AG04450 (cell line): ENCODE measurements at regions of chr17 and their contacts with region 1.

Region 1: DNA sequence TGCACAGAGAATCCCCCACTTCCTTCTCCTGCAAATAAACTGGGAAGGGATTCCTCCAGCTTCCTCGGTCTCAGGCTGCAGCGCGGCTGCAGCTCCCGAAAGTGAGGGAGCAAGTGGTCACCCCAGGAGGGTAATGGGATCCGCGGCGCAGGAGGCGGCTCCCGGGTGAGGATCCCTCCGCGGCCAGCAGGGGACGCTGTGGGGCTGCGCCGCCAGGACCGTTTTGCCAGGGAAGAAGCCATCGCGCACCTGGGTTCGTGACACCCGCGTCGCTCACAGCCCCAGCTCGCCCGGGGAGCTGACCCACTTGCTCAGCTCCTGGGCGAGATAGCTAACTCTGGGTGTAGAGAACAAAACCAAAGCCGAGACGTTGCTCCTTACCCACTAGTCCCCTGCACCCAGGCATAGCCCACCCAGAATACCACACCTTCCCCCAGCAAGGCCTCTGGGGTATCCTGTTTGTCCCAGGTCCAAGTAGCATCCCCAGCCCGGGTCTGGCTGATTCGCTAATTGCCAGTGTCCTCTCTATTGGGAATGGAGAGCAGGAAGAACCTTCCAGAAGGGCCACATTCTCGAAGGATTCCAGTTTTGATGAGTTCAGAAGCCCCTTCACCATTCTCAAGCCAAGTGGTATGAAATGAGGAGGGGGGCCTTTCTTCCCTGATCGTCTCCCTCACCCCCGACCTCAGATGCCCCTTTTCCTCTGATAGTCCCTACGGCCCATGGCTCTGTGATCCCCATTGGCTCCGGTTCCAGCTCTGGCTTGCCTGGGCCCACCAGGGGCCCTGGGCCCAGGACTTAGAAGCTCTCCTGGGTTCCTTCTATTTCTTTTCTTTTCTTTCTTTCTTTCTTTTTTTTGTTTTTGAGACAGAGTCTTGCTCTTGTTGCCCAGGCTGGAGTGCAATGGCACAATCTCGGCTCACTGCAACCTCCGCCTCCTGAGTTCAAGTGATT is 14.1 kb downstream of the CYGB start:
- DNase-seq: no peak
- H3K4me3 ChIP-seq: no peak overlapping the region
- H3K27ac ChIP-seq: no peak overlapping the region
- H3K27me3 ChIP-seq: no peaks in the 10 kb centered on the region
- CTCF ChIP-seq: peak; percentile 99

Region 2: DNA sequence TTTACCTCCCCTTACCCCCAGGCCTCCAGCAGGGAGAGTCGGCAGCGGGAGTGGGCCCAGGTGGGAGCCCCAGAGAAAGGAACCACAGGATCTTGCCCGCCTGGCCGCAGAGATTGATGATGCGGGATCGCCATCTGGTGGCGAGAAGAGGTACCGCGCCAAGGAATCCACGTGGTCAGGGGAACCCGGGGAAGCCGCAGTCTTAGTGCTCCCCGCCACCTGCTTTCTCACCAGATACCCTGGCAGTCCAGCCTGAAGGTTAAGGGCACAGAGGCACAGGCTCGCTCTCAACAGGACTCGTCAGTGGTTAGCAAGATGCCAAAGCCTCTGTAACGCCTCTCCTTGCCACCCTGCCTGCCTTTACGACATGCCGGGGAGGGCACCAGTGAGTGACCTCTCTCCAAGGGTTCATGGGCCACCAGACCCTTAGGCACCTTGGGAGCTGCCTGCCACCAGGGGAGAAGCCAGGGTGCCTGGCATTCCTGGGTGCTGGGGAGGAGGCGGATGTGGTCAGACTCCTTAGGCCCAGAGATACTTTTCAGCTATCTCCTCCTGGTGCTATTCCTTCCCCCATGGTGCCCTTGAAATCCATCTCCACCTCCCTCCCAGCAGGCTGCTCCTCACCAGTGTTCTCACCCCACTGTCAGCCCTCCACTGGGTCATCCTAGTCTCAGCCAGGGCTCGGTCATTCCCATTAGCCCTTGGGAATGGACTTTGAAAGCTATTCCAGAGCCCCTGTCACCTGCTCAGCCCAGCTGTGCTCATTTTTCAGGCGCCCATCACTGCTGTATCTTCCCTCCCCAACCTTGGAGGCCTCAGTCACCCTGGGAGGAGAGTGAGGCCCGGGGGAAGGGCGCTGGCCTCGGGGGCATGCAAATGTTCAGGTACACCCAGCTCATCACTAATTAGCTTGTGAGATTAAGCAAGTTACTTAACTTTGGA is 16.7 kb before region 1 on chr17:
- CTCF ChIA-PET with region 1: interaction called, 14 read pairs
- POLR2A ChIA-PET with region 1: no interaction called
- DNase-seq: no peak
- H3K4me3 ChIP-seq: no peak overlapping the region
- H3K27ac ChIP-seq: no peak overlapping the region
- H3K27me3 ChIP-seq: peaks cover 5% of the 10 kb centered on the region
- CTCF ChIP-seq: peak; percentile 87

Region 3: DNA sequence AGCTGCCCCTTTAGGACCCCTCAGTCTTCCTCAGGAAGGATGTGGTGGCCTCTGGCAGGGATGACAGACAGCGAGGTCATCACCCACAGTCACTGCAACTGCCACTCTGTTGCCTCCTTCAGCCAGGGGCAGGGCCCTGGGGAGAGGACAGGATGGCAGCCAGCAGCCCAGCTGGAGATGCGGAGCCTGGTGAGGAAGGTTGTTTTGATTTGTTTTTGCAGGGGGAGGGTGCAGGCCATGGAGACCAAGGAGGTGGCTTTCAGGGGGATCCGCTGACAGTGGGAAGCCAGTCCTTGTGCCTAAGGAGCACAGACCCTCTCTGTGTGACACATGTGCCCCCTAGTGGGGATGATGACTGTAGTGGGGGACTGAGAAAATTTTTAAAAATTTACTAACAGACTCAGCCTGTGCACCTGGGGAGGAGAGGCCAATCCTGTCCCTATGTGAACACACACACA is 23.9 kb after region 1 on chr17:
- CTCF ChIA-PET with region 1: interaction called, 41 read pairs
- POLR2A ChIA-PET with region 1: interaction called, 8 read pairs
- DNase-seq: no peak
- H3K4me3 ChIP-seq: no peak overlapping the region
- H3K27ac ChIP-seq: peak overlapping the region; percentile 87
- H3K27me3 ChIP-seq: peaks cover 2% of the 10 kb centered on the region
- CTCF ChIP-seq: peak; percentile 69

Region 4: DNA sequence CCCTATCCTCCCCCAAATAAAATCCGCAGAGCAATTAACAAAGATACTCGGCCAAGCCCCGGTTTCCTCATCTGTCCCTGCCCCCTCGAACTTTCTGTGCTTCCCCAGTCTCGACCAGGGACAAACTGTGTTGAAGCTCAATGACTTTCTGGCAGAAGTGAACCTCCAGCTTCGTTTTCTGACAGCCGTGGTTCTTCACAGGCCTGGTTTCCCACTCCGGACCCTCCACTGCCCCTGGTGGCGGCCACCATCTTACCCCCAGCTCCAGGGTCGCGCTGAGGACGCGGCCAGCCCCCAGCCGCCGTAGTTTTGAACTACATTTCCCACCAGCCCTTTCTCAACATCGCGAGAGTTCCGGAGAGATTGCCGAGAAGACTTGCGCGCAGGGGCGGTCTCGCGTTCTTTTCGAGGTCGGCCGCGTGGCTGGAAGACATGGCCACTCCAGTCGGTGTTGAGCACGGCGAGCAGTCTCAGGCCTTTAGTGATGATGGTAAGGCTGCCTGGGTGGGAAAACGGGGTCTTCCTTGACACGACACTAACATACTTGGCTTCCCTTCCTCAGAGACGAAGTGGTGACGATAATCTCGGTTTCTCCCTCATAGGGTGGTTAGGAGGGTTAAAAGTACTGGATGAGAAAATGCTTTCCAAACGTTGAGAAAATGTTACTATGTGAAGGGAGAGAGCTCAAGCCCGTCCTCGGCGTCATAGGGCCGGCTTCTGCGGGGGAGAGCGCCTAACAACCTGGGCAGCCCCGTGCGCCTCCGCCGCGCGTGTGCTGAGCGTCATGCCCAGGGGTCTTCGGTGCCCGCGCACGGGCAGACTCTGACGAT is 34.2 kb after region 1 on chr17:
- CTCF ChIA-PET with region 1: interaction called, 23 read pairs
- POLR2A ChIA-PET with region 1: interaction called, 12 read pairs
- DNase-seq: peak; percentile 91
- H3K4me3 ChIP-seq: peak overlapping the region; percentile 95
- H3K27ac ChIP-seq: peak overlapping the region; percentile 68
- H3K27me3 ChIP-seq: no peaks in the 10 kb centered on the region
- CTCF ChIP-seq: peak; percentile 70

Region 5: DNA sequence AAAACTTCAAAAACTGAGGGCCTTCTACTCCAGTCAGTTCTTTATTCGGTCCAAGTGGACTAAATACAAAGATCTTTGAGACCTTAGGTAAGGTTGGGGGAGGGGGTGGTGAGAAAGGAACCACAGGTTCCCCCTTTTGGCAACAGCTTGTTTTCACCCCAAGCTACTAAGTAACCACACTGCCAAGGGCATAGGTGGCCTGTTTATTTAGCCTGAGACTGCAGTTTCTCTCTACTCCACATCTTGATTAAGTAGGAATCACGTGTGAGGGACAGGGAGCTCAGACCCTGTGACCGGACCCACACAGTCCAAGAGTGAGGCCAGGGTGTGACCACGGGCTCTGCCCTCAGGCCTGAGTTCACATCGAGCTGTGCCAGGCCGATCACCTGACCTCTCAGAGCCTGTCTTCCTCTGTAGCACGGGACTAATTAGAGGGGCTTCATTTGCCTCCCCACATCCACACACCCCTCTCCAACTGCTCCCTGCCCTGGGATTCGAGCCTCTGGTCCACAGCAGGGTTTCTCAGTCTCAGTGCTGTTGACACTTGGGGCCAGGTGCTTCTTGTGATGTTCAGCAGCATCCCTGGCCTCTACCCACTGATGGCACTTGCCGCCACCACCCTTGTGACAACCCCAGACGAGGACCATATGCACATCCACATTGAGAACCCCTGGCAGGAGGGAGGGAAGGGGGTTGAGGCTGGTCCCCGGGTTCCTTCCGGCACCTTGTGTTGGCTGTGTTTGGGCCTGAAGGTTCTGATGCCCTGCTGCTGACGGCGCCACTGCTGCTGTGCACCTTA is 44.5 kb after region 1 on chr17:
- CTCF ChIA-PET with region 1: interaction called, 10 read pairs
- POLR2A ChIA-PET with region 1: no interaction called
- DNase-seq: no peak
- H3K4me3 ChIP-seq: no peak overlapping the region
- H3K27ac ChIP-seq: no peak overlapping the region
- H3K27me3 ChIP-seq: no peaks in the 10 kb centered on the region
- CTCF ChIP-seq: no peak

Region 6: GRCh38 chr17:76681222-76682137 is 158.1 kb after region 1 on chr17:
- CTCF ChIA-PET with region 1: interaction called, 22 read pairs
- POLR2A ChIA-PET with region 1: no interaction called
- DNase-seq: peak; percentile 42
- H3K4me3 ChIP-seq: no peak overlapping the region
- H3K27ac ChIP-seq: no peak overlapping the region
- H3K27me3 ChIP-seq: no peaks in the 10 kb centered on the region
- CTCF ChIP-seq: peak; percentile 81

Region 7: DNA sequence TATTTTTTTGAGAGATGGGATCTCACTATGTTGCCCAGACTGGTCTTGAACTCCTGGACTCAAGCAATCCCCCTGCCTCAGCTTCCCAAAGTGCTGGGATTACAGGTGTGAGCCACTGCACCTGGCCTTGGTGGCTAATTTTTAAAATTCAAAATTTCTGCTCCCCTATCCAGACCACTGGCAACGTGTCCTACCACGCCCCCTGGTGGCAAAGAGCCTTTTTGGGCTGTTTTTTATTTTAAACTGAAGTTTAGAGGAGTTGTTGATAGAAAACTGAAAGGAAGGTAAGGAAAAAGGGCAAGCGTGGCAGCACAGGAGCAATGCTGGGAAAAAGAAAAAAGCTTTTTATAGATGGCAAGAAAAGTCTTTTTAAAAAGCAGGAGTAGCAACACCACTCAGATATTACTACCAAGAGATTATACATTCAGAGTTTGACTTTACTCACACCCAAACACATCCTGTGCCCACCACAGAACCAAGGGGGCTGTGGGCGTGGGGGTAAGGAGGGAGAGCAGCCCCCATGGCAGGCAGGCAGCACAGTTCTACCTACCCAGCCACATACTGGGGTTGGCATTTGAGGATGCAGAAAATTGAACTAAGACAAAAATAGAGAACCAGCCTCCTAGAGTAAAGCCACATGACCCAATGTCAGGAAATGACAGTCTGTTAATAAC is 191.6 kb after region 1 on chr17:
- CTCF ChIA-PET with region 1: interaction called, 10 read pairs
- POLR2A ChIA-PET with region 1: no interaction called
- DNase-seq: no peak
- H3K4me3 ChIP-seq: no peak overlapping the region
- H3K27ac ChIP-seq: peak overlapping the region; percentile 98
- H3K27me3 ChIP-seq: no peaks in the 10 kb centered on the region
- CTCF ChIP-seq: peak; percentile 83

Region 8: DNA sequence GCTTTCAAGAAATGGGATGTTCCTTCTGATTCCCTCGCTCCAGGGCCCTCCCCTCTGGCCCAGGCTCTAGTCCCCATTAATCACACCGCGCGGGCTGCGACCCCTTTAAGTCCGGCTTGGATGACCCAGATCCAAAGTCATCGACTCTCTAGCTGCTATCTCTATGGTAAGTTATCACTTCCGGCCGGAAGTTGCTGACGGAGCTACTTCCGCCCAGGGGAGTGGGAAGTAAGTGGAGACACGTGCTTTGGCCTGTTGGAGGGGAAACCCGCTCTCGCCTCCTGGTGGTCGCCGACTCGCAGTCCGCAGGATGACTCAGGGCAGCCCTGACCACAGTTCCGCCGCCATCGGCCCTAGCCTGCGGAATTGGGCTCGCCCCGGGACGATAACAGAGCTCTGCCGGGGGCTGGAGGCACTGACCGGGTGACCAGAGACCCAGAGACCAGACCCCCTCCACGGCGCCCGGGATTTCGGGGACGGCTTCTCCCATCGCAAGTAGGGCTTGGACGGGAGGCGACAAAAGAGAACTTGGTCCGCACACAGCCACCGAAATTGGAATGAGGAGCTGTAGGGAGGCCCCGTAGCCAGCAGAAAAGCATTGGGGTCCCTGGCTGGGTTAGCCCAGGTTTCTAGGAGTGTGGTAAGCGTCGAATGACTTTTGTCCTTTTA is 565.2 kb after region 1 on chr17:
- CTCF ChIA-PET with region 1: no interaction called
- POLR2A ChIA-PET with region 1: no interaction called
- DNase-seq: peak; percentile 96
- H3K4me3 ChIP-seq: peak overlapping the region; percentile 89
- H3K27ac ChIP-seq: peak overlapping the region; percentile 89
- H3K27me3 ChIP-seq: no peaks in the 10 kb centered on the region
- CTCF ChIP-seq: peak; percentile 70